ENCODE measurements at regions of chrX and their contacts with region 1.

Region 1: DNA sequence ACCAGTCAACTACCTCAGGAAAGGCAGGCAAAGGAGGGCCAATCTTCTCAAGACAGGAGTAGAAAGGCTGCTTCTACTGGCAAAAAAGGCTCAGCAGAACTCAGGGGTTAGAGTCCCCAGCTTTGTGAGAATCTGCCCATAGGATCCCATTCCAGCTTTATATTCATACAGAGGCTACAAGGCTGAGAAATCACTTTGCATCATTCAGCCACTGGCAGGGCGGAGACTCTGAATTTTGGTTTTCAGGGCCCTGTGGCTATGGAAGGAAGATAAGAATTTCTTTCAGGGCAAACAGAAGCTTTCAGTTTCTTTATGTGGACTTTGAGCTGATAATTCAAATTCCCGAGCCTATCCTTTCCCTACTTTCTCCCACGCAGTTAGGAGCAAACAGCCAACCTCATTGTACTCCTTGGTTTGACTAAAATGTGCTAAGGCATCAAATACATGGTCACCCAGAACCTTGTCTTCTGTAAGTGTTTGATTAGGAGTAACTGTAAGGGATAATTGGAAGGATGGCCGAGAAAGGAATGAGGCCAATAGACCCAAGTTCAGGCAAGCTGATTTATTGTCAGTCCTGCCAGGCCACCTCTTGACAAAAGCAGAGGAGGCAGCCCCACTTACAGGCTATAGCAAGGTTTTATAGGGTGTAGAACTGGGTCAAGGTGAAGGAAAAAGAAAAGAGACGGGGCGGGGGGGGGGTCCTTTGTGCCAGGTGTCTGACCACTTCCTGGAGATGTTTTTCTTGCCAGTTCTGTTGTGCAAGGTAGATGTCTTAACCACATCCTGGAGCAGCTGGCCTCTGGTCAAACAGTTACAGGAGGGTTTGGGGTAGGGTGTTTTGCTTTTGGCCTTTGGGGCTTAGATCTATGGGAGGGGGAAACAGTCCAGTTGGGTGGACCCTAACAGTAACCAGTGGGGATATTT is 165.3 kb upstream of the PPP1R2C start:
- DNase-seq: no peak
- ATAC-seq: peak; percentile 66
- H3K4me3 Mint-ChIP-seq: peak overlapping the region; percentile 50
- H3K27ac Mint-ChIP-seq: peak overlapping the region; percentile 93
- H3K4me1 Mint-ChIP-seq: peaks cover 78% of the 10 kb centered on the region
- H3K27me3 Mint-ChIP-seq: no peaks in the 10 kb centered on the region
- CTCF ChIP-seq: no peak

Region 2: DNA sequence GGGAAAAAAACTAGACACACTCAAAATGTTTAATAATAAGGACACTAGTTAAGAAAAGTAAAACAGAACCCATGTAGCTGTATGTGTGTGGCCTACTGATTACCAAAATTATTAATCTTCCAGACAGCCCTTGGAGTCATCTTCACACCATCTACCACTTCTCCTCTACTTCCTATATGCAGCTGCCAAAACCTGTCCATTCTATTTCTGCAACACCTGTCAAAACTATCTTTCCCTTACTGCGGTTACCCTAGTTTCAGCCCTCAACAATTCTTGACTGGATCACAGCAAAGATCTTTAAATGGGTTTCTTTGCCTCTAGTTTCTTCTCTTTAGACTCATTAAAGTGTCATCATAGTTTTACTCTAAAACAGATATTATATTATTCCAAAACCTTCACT is 1146.7 kb before region 1 on chrX:
- CTCF ChIA-PET with region 1: interaction called, 5 read pairs
- POLR2A ChIA-PET with region 1: no interaction called
- intact Hi-C with region 1: loop called (anchors 5 kb)
- DNase-seq: no peak
- ATAC-seq: no peak
- H3K4me3 Mint-ChIP-seq: no peak overlapping the region
- H3K27ac Mint-ChIP-seq: no peak overlapping the region
- H3K4me1 Mint-ChIP-seq: peaks cover 32% of the 10 kb centered on the region
- H3K27me3 Mint-ChIP-seq: no peaks in the 10 kb centered on the region
- CTCF ChIP-seq: no peak

Region 3: DNA sequence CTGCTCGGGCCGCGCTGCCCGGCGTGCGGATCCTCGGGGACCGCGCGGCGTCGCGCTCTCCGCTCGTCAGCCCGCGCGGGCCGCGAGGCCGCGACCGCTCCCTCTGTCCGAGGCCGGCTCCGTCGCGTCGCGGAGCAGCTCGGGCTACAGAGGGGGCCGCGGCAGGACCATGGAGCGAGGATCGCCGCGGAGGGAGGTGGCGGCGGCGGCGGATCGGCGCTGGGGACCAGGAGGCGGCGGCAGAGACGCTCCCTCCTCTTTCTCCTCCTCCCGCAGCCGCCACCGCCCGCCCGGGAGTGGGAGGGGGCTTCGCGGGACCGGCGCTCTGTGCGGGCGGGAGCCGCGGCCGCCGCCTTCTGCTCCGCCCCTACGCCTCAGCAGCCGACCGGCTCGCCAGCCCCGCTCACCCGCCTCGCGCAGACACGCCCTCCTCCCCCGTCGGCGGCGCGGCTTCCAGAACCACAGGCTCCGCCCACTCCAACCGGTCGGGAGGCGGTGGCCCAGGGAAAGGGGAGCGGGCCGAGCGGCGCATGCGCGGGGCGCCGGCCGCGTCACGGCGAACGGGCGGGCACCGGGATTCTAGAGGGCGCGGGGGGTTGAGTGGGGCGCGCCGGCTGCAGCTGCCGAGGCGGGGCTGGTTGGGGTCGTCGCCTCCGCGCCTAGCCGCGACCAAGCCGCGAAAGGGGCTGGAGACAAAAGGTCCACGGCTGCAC is 1019.9 kb before region 1 on chrX and contains the start of gene CASK:
- CTCF ChIA-PET with region 1: no interaction called
- POLR2A ChIA-PET with region 1: no interaction called
- intact Hi-C with region 1: loop called (anchors 10 kb)
- DNase-seq: peak; percentile 78
- ATAC-seq: peak; percentile 89
- H3K4me3 Mint-ChIP-seq: peak within 1 kb of the TSS; percentile 91
- H3K27ac Mint-ChIP-seq: peak within 1 kb of the TSS; percentile 81
- H3K4me1 Mint-ChIP-seq: peaks cover 20% of the 10 kb centered on the region
- H3K27me3 Mint-ChIP-seq: no peaks in the 10 kb centered on the region
- CTCF ChIP-seq: no peak
- total RNA-seq, gene CASK: 21.5 and 23.0 TPM in 2 replicates

Region 4: DNA sequence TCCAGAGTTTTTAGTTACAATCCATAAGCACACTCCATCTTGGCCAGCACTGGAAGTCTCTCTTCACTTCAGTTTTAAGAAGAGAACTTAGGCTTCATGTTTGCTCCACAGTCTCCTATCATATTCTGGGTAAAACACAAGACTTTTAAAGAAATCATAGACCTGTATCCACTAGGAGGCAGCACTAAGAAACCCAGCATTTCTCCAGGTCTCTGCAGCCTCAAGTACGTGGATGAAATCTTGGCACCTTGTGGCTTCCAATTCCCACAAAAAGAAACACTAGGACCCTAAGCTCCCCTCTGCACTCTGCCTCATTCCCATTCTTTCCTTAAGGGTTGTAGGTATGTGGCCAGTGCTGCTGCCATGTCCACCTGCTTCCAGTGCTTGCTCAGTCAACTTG is 652.7 kb before region 1 on chrX:
- CTCF ChIA-PET with region 1: no interaction called
- POLR2A ChIA-PET with region 1: no interaction called
- intact Hi-C with region 1: loop called (anchors 5 kb)
- DNase-seq: no peak
- ATAC-seq: no peak
- H3K4me3 Mint-ChIP-seq: no peak overlapping the region
- H3K27ac Mint-ChIP-seq: no peak overlapping the region
- H3K4me1 Mint-ChIP-seq: peaks cover 2% of the 10 kb centered on the region
- H3K27me3 Mint-ChIP-seq: no peaks in the 10 kb centered on the region
- CTCF ChIP-seq: no peak

Region 5: DNA sequence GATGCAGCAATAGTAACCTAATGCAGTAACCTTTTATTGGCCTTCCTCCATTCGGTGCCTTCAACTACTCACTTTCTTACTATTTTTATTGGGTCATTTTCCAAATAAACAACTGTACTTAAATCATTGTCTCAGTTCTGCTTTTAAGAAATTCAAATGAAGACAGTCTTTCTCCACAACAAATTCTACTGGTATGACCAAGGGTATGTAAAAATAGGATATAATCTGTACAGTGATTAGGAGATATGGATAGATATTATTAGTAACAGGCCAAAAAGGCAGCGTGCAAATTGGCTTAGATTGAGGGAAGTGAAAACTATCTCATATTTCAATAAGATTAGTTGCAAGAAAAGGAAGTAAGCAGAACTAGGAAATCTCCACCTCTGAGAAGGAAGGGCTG is 12.0 kb after region 1 on chrX:
- CTCF ChIA-PET with region 1: no interaction called
- POLR2A ChIA-PET with region 1: interaction called, 3 read pairs
- intact Hi-C with region 1: loop called (anchors 1 kb)
- DNase-seq: no peak
- ATAC-seq: peak; percentile 78
- H3K4me3 Mint-ChIP-seq: peak overlapping the region; percentile 29
- H3K27ac Mint-ChIP-seq: peak overlapping the region; percentile 82
- H3K4me1 Mint-ChIP-seq: peaks cover 48% of the 10 kb centered on the region
- H3K27me3 Mint-ChIP-seq: no peaks in the 10 kb centered on the region
- CTCF ChIP-seq: no peak

Region 6: GRCh38 chrX:44152852-44153251 is 1209.5 kb after region 1 on chrX:
- CTCF ChIA-PET with region 1: no interaction called
- POLR2A ChIA-PET with region 1: no interaction called
- intact Hi-C with region 1: no loop called
- DNase-seq: no peak
- ATAC-seq: no peak
- H3K4me3 Mint-ChIP-seq: no peak overlapping the region
- H3K27ac Mint-ChIP-seq: no peak overlapping the region
- H3K4me1 Mint-ChIP-seq: no peaks in the 10 kb centered on the region
- H3K27me3 Mint-ChIP-seq: no peaks in the 10 kb centered on the region
- CTCF ChIP-seq: no peak